Heart left ventricle (tissue), 16 donors: ENCODE measurements at regions of chr17 and their contacts with region 1.

Region 1: DNA sequence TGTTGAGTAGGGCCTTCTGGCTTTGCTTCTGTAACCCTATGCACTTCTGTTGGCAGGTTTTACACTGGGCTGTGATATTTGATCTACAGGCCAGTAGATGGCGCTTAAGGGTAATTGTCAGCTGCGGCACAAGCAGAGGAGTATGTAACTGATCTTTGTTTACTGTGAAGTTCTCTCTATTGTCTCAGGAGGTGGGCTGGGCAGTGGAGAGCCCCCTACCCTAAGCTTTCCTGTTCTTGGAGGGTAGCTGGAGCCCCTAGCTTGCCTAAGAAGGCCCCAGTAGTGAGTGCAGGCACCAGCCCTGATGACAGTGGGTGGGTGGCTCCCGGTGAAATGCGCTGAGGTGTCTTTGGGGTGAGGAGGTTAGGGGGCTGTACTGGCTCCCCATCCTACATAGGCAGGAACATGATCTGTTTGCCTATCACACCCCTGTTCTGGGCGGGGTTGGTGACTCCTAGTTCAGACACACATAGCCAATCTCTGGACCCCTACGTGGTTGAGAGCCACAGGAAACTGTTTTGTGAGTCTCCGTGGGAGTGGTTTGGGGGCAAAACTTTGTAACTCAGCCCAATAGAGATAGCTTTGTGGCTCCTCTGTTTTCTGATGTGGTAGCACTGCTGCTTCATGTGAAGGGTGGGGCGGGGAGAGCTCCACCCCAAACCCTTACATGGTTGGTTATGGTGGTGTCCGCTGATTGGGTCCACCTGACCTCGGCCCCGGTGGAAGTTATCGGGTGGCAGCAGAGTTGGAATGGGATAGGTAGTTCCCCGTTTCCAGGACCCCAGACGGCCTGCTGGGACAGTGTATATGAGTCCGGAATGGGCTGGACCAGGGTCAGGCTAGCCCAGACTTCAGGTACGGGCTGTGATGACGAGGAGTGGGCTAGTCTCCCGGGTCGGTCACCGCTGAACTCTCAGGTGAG is 60.4 kb downstream of the SLFN11 start:
- DNase-seq: peak; percentile 44 to 68 (median 49)
- ATAC-seq: peak; percentile 80 to 90 (median 87)
- H3K4me3 ChIP-seq: peak overlapping the region in 11 of 12 donors; percentile 19 to 63 (median 49)
- H3K27ac ChIP-seq: peak overlapping the region; percentile 49 to 87 (median 78)
- H3K4me1 ChIP-seq: peaks cover 0 to 36% (median 31%) of the 10 kb centered on the region in 12 donors
- H3K27me3 ChIP-seq: no peaks in the 10 kb centered on the region
- CTCF ChIP-seq: peak; percentile 66 to 87 (median 82)
- POLR2A ChIP-seq: peak in 1 of 2 donors; percentile 12

Region 2: GRCh38 chr17:35170968-35171771 is 141.9 kb before region 1 on chr17:
- intact Hi-C with region 1: loop called in 2 of 10 experiments (anchors 10 kb)
- DNase-seq: no peak
- ATAC-seq: peak in 2 of 4 donors; percentile 14 to 23
- H3K4me3 ChIP-seq: no peak overlapping the region
- H3K27ac ChIP-seq: no peak overlapping the region
- H3K4me1 ChIP-seq: peaks cover 0 to 11% (median 0%) of the 10 kb centered on the region in 12 donors
- H3K27me3 ChIP-seq: no peaks in the 10 kb centered on the region
- CTCF ChIP-seq: peak in 9 of 12 donors; percentile 13 to 53 (median 33)
- POLR2A ChIP-seq: no peak

Region 3: GRCh38 chr17:35345926-35346771 is 33.1 kb after region 1 on chr17:
- intact Hi-C with region 1: loop called in 4 of 10 experiments (anchors 2 to 5 kb)
- DNase-seq: peak; percentile 85 to 89 (median 88)
- ATAC-seq: peak; percentile 90 to 95 (median 92)
- H3K4me3 ChIP-seq: peak overlapping the region in 11 of 12 donors; percentile 6 to 60 (median 48)
- H3K27ac ChIP-seq: peak overlapping the region; percentile 68 to 91 (median 80)
- H3K4me1 ChIP-seq: peaks cover 0 to 52% (median 18%) of the 10 kb centered on the region in 12 donors
- H3K27me3 ChIP-seq: peaks cover 0 to 14% (median 0%) of the 10 kb centered on the region in 9 donors
- CTCF ChIP-seq: no peak
- POLR2A ChIP-seq: peak in 1 of 2 donors; percentile 33

Region 4: GRCh38 chr17:35432176-35433074 is 119.4 kb after region 1 on chr17 and contains the start of gene SLFN12:
- intact Hi-C with region 1: loop called in 4 of 10 experiments (anchors 2 to 10 kb)
- DNase-seq: peak in 4 of 5 donors; percentile 61 to 74 (median 68)
- ATAC-seq: peak; percentile 70 to 93 (median 89)
- H3K4me3 ChIP-seq: peak within 1 kb of the TSS; percentile 49 to 81 (median 68)
- H3K27ac ChIP-seq: peak within 1 kb of the TSS; percentile 86 to 97 (median 93)
- H3K4me1 ChIP-seq: peaks cover 0 to 42% (median 19%) of the 10 kb centered on the region in 12 donors
- H3K27me3 ChIP-seq: no peaks in the 10 kb centered on the region
- CTCF ChIP-seq: no peak
- POLR2A ChIP-seq: peak in 1 of 2 donors; percentile 51
- total RNA-seq, gene SLFN12: 3.3 to 10.0 (median 4.5) TPM

Region 5: DNA sequence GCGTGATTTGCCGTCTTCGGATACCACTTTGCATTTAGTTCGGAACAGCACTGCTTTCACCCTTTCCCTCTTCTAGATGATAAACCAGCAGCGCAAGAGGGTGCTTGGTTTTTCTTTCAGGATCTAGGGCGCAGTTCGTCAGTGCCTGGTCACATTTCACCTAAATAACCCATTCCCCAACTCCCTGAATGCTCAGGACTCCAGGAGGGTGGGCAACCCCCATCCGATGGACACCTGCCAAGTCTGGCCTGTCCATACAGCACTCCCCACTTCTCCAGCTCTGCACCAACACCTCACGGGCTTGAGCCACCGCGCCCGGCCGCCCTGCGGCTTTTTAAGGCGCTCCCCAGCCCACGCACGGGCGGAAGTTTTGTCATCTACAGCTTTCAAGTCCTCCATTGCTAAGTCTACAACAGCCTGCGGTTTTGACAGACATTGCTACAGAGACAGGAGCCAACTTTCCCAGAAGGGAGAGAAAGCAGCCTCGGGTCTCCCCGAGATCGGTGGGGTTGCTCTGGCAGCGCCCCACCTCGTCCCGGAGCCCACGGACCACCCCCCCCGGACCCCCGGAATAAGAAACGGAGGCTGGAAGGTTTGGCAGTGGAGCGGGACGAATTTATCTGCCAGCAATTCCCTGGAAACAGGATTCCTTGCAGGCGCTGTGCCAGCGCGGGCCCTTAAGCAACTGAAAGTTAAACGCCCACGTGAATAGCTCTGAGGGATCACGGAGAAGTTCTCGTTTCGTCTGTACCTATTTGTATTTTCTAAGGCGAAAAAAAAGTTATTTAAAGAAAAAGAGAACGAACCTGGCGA is 174.1 kb after region 1 on chr17:
- intact Hi-C with region 1: loop called in 1 of 10 experiments (anchors 5 kb)
- DNase-seq: peak; percentile 50 to 75 (median 61)
- ATAC-seq: peak in 3 of 4 donors; percentile 76 to 87 (median 85)
- H3K4me3 ChIP-seq: peak overlapping the region; percentile 38 to 77 (median 59)
- H3K27ac ChIP-seq: peak overlapping the region in 11 of 12 donors; percentile 4 to 61 (median 44)
- H3K4me1 ChIP-seq: peaks cover 0 to 24% (median 6%) of the 10 kb centered on the region in 12 donors
- H3K27me3 ChIP-seq: peaks cover 9 to 58% (median 41%) of the 10 kb centered on the region in 9 donors
- CTCF ChIP-seq: no peak
- POLR2A ChIP-seq: no peak

Region 6: DNA sequence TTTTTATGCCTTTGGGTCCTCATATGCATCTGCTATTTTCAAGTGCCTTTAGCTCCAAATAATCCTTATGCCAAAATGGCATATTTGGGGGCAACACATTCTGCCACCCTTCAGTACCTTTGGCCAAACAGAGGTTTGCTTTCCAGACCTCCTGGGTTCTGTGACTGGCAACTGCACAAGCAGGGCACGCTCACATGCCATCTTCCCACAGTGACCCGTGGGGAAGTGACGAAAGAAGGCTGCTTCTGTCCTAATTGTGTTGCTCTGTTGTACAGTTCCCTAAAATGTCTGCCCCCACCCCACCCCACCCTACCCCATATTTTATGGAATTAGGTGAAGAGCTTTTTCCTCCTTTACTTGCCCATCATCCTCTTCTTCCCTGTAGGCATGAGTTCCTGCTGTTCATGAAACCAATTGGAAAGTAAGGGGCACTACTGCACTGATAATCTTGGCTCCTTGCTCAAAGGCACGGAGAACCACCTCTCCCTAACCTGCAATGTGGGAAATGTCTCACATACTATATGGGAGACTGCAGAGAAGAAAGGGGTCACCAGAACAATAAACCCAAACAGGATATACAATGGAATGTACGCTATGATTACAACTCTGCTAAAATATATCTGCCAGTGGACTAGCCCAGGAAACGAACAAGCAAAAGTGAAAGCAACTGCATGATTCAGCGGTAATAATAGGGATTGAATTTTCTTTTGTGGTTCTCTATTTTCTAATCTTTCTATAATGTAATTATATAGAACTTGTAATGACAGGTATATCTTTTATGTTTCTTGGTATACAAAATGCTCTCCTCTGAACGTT is 227.7 kb after region 1 on chr17:
- intact Hi-C with region 1: loop called in 6 of 10 experiments (anchors 2 kb)
- DNase-seq: peak; percentile 40 to 68 (median 56)
- ATAC-seq: peak; percentile 28 to 75 (median 60)
- H3K4me3 ChIP-seq: peak overlapping the region in 9 of 12 donors; percentile 32 to 57 (median 42)
- H3K27ac ChIP-seq: peak overlapping the region; percentile 50 to 93 (median 60)
- H3K4me1 ChIP-seq: peaks cover 0 to 54% (median 32%) of the 10 kb centered on the region in 12 donors
- H3K27me3 ChIP-seq: no peaks in the 10 kb centered on the region
- CTCF ChIP-seq: no peak
- POLR2A ChIP-seq: no peak

Region 7: DNA sequence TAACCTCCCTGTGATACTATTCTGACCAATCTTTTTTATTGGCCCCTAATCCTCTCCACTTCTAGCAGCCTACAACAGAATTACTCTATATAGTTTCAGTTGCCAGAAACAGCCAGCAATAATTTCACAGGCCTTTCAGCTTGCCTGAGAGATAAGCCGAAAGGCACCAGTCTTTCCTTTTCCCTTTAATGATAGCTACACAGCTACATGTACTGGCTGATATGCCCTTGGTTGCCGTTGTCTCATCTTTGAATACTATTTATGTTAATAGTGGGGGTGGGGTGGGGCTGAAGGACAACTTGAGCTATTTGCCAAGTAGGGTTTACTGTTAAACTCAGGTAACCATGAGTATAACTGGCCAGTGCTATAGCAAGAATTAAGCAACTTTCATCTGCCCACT is 382.6 kb after region 1 on chr17:
- intact Hi-C with region 1: no loop called
- DNase-seq: no peak
- ATAC-seq: peak; percentile 73 to 81 (median 78)
- H3K4me3 ChIP-seq: no peak overlapping the region
- H3K27ac ChIP-seq: peak overlapping the region in 9 of 12 donors; percentile 39 to 81 (median 64)
- H3K4me1 ChIP-seq: peaks cover 0 to 17% (median 2%) of the 10 kb centered on the region in 12 donors
- H3K27me3 ChIP-seq: no peaks in the 10 kb centered on the region
- CTCF ChIP-seq: no peak
- POLR2A ChIP-seq: no peak